Transverse colon (tissue), 4 donors: ENCODE measurements at regions of chr9 and their contacts with region 1.

Region 1: GRCh38 chr9:111298731-111299598 is 31.1 kb downstream of the OR2K2 start:
- DNase-seq: peak; percentile 11
- H3K4me3 ChIP-seq: no peak overlapping the region
- H3K27ac ChIP-seq: peak overlapping the region; percentile 1 to 62 (median 41)
- H3K4me1 ChIP-seq: peaks cover 0 to 16% (median 0%) of the 10 kb centered on the region in 4 donors
- H3K27me3 ChIP-seq: no peaks in the 10 kb centered on the region
- CTCF ChIP-seq: peak; percentile 76 to 91 (median 82)
- EP300 ChIP-seq: no peak
- POLR2A ChIP-seq: no peak

Region 2: DNA sequence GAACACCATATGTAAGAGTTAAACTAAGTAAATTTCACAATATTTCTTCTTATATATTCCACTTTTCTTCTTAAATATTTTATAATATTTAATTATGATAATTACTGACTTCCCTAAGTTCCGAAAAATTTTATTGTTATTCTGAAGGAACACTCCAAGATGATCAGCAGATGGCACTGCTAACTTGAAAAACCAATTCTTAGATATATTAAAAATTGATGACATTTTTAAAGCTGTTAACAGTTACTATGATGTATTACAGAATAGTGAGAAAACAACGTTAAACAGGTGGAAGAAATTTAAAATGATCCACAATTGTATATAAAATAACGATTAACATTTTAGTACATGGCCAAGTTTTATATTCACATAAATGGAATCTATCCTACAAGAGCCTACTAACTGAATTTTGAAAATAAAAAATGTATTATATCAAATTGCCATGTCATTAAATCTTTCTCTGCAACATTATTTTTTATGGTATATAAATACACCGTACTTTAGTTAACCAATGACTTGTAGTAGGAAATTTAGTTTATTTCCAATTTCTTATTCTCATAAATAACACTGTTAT is 660.5 kb before region 1 on chr9:
- in situ Hi-C with region 1: loop called (anchors 5 to 25 kb)
- intact Hi-C with region 1: loop called (anchors 10 kb)
- DNase-seq: no peak
- H3K4me3 ChIP-seq: no peak overlapping the region
- H3K27ac ChIP-seq: no peak overlapping the region
- H3K4me1 ChIP-seq: no peaks in the 10 kb centered on the region
- H3K27me3 ChIP-seq: no peaks in the 10 kb centered on the region
- CTCF ChIP-seq: peak; percentile 23 to 39 (median 30)
- EP300 ChIP-seq: no peak
- POLR2A ChIP-seq: no peak

Region 3: GRCh38 chr9:111037381-111038305 is 261.3 kb before region 1 on chr9:
- in situ Hi-C with region 1: loop called in 1 of 4 experiments (anchors 25 kb)
- intact Hi-C with region 1: no loop called
- DNase-seq: peak; percentile 42
- H3K4me3 ChIP-seq: peak overlapping the region; percentile 68 to 84 (median 71)
- H3K27ac ChIP-seq: peak overlapping the region; percentile 86 to 95 (median 94)
- H3K4me1 ChIP-seq: peaks cover 0 to 30% (median 9%) of the 10 kb centered on the region in 4 donors
- H3K27me3 ChIP-seq: peaks cover 9% of the 10 kb centered on the region
- CTCF ChIP-seq: peak in 2 of 5 experiments; percentile 6 to 23
- EP300 ChIP-seq: no peak
- POLR2A ChIP-seq: no peak

Region 4: GRCh38 chr9:111474385-111474784 is 175.4 kb after region 1 on chr9:
- in situ Hi-C with region 1: no loop called
- intact Hi-C with region 1: no loop called
- DNase-seq: no peak
- H3K4me3 ChIP-seq: no peak overlapping the region
- H3K27ac ChIP-seq: no peak overlapping the region
- H3K4me1 ChIP-seq: peaks cover 3 to 48% (median 13%) of the 10 kb centered on the region in 4 donors
- H3K27me3 ChIP-seq: no peaks in the 10 kb centered on the region
- CTCF ChIP-seq: no peak
- EP300 ChIP-seq: no peak
- POLR2A ChIP-seq: no peak